ENCODE measurements at regions of chr20 and their contacts with region 1.

Region 1: GRCh38 chr20:58870239-58871014 is 17.9 kb downstream of the GNAS start:
- DNase-seq: peak; percentile 46 to 78
- ATAC-seq: peak; percentile 72 to 81 (median 77)
- H3K4me3 ChIP-seq: no peak overlapping the region
- H3K4me3 Mint-ChIP-seq: no peak overlapping the region
- H3K27ac ChIP-seq: no peak overlapping the region
- H3K27ac Mint-ChIP-seq: no peak overlapping the region
- H3K4me1 ChIP-seq: no peaks in the 10 kb centered on the region
- H3K4me1 Mint-ChIP-seq: peaks cover 0 to 9% of the 10 kb centered on the region in 2 donors
- H3K27me3 ChIP-seq: no peaks in the 10 kb centered on the region
- H3K27me3 Mint-ChIP-seq: peaks cover 16 to 23% of the 10 kb centered on the region in 2 donors
- CTCF ChIP-seq: peak; percentile 70

Region 2: GRCh38 chr20:58538752-58539151 is 331.7 kb before region 1 on chr20:
- intact Hi-C with region 1: no loop called
- DNase-seq: no peak
- ATAC-seq: no peak
- H3K4me3 ChIP-seq: no peak overlapping the region
- H3K4me3 Mint-ChIP-seq: no peak overlapping the region
- H3K27ac ChIP-seq: no peak overlapping the region
- H3K27ac Mint-ChIP-seq: no peak overlapping the region
- H3K4me1 ChIP-seq: no peaks in the 10 kb centered on the region
- H3K4me1 Mint-ChIP-seq: no peaks in the 10 kb centered on the region
- H3K27me3 ChIP-seq: no peaks in the 10 kb centered on the region
- H3K27me3 Mint-ChIP-seq: peaks cover 0 to 3% of the 10 kb centered on the region in 2 donors
- CTCF ChIP-seq: no peak

Region 3: DNA sequence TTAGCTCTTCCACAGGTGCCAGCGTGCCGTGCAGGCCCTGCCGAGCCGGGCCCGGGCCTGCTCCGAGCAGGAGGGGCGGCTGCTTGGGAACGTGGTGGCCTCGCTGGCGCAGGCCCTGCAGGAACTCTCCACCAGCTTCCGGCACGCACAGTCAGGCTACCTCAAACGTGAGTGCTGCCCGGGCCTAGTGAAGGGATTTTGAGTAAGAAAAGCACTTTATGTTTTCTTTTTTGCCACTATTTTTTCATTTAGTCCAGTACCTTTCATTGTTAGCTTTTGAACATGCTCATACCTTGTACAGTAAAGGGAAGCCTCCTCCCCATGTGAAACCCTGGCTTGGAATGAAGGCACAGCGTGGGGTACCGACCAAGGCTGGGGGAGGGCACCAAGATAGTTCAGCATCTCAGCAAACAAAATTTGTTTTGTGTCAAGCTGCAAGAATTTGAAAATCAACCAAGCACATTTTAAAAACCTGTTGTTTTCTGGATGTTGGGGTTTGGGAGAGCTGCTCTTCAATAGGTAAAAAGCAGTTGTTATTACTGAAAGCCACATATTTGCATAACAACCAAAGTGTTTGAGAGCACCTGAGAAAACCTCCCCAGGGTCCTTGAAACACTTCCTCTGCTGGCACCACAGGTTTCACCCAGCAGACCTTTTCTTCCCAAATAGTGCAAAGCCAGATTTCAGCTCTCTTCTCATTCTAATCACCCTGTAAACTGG is 201.0 kb before region 1 on chr20:
- intact Hi-C with region 1: no loop called
- DNase-seq: no peak
- ATAC-seq: no peak
- H3K4me3 ChIP-seq: no peak overlapping the region
- H3K4me3 Mint-ChIP-seq: no peak overlapping the region
- H3K27ac ChIP-seq: no peak overlapping the region
- H3K27ac Mint-ChIP-seq: no peak overlapping the region
- H3K4me1 ChIP-seq: no peaks in the 10 kb centered on the region
- H3K4me1 Mint-ChIP-seq: peaks cover 10% of the 10 kb centered on the region in 2 donors
- H3K27me3 ChIP-seq: no peaks in the 10 kb centered on the region
- H3K27me3 Mint-ChIP-seq: no peaks in the 10 kb centered on the region
- CTCF ChIP-seq: no peak

Region 4: GRCh38 chr20:58950603-58951002 is 80.2 kb after region 1 on chr20:
- intact Hi-C with region 1: no loop called
- DNase-seq: no peak
- ATAC-seq: no peak
- H3K4me3 ChIP-seq: no peak overlapping the region
- H3K4me3 Mint-ChIP-seq: no peak overlapping the region
- H3K27ac ChIP-seq: no peak overlapping the region
- H3K27ac Mint-ChIP-seq: no peak overlapping the region
- H3K4me1 ChIP-seq: no peaks in the 10 kb centered on the region
- H3K4me1 Mint-ChIP-seq: no peaks in the 10 kb centered on the region
- H3K27me3 ChIP-seq: no peaks in the 10 kb centered on the region
- H3K27me3 Mint-ChIP-seq: peaks cover 5 to 18% of the 10 kb centered on the region in 2 donors
- CTCF ChIP-seq: no peak

Region 5: DNA sequence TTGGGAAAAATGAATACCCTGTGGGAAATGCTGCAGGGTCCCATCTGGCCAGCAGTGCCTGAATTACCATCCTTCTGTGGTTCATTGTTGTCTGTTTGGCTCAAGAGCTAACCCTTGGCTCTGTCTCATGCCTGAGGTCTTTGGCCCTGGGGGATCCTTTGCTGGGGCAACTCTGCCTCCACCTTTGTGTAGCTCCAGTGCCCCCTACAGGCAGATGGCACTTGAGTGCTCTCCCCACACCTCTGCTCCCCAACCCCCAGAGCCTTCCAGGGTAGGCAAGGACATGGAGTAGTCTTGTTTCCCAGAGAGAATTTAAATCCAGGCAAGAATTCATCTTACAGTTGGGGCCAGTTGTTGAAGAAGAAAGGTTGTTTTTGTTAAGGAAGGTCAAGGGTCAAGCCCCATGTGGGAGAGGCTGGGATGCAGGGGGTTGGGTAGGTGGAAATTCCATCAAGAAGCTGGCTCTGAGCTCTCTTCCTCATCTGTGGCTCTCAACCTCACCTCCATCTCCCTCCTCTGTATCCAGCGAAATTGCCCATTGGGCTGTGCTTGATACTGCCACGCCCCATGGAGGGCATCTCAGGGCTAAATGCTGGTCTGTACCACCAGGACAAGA is 337.4 kb after region 1 on chr20:
- intact Hi-C with region 1: loop called (anchors 5 kb)
- DNase-seq: peak; percentile 71 to 92
- ATAC-seq: peak; percentile 88 to 99 (median 98)
- H3K4me3 ChIP-seq: no peak overlapping the region
- H3K4me3 Mint-ChIP-seq: peak overlapping the region; percentile 40
- H3K27ac ChIP-seq: no peak overlapping the region
- H3K27ac Mint-ChIP-seq: peak overlapping the region; percentile 81 to 86
- H3K4me1 ChIP-seq: peaks cover 32% of the 10 kb centered on the region
- H3K4me1 Mint-ChIP-seq: peaks cover 41 to 42% of the 10 kb centered on the region in 2 donors
- H3K27me3 ChIP-seq: no peaks in the 10 kb centered on the region
- H3K27me3 Mint-ChIP-seq: no peaks in the 10 kb centered on the region
- CTCF ChIP-seq: peak; percentile 84

Region 6: DNA sequence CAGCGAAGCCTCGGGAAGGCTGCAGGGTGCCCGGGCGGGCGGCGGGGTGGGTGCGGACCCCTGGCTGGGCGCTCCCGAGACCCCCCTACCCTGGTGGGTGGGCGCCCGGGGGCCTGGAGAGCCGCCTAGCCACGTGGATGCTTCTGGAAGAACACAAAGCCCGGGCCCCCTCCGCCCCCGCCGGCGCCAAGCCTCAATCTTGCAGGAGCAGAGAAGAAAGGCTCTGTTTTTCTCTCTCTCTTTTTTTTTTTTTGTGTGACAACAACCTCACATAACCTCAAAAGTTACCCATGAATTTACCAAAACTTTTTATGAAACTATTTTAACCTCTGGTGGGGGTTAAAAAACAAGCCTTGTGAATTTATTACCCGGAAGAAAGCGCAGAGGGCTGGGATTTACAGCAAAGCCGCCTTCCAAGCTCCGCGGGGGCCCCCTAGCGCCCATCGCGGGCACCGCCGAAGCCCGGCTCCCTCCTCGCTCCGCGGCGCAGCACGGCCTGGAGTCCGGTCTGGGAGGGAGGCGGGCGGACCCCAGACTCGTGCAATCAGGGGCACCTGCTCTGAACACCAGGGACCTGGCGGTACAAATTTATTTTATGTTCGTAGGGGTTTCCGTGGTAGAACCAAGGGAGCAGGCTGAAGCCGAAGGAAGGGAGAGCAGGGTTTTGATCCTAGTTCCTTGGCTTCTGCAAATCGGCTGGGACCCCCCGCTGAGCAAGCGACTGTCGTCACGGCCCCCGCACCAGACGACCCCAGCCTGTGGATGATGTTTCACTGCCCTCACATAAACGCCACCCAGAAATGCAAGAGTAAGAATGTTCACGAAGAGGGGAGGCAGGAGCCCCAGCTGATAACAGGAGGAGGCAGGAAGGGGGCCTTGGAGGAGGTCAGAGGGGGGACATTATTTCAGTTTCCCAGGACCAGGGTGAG is 352.1 kb after region 1 on chr20:
- intact Hi-C with region 1: loop called (anchors 2 kb)
- DNase-seq: peak; percentile 79 to 87
- ATAC-seq: peak; percentile 90 to 98 (median 96)
- H3K4me3 ChIP-seq: peak overlapping the region; percentile 34
- H3K4me3 Mint-ChIP-seq: peak overlapping the region; percentile 93
- H3K27ac ChIP-seq: peak overlapping the region; percentile 12
- H3K27ac Mint-ChIP-seq: peak overlapping the region; percentile 73 to 76
- H3K4me1 ChIP-seq: peaks cover 17% of the 10 kb centered on the region
- H3K4me1 Mint-ChIP-seq: peaks cover 30 to 33% of the 10 kb centered on the region in 2 donors
- H3K27me3 ChIP-seq: no peaks in the 10 kb centered on the region
- H3K27me3 Mint-ChIP-seq: no peaks in the 10 kb centered on the region
- CTCF ChIP-seq: peak; percentile 96

Region 7: GRCh38 chr20:59495894-59496510 is 625.6 kb after region 1 on chr20:
- intact Hi-C with region 1: loop called (anchors 1 kb)
- DNase-seq: peak; percentile 58 to 78
- ATAC-seq: peak; percentile 30 to 74 (median 47)
- H3K4me3 ChIP-seq: no peak overlapping the region
- H3K4me3 Mint-ChIP-seq: no peak overlapping the region
- H3K27ac ChIP-seq: no peak overlapping the region
- H3K27ac Mint-ChIP-seq: no peak overlapping the region
- H3K4me1 ChIP-seq: no peaks in the 10 kb centered on the region
- H3K4me1 Mint-ChIP-seq: no peaks in the 10 kb centered on the region
- H3K27me3 ChIP-seq: peaks cover 2% of the 10 kb centered on the region
- H3K27me3 Mint-ChIP-seq: peaks cover 10 to 28% of the 10 kb centered on the region in 2 donors
- CTCF ChIP-seq: peak; percentile 93

Measured in natural killer cell (primary cell).